B cell (primary cell): ENCODE measurements at regions of chr3 and their contacts with region 1.

Region 1: DNA sequence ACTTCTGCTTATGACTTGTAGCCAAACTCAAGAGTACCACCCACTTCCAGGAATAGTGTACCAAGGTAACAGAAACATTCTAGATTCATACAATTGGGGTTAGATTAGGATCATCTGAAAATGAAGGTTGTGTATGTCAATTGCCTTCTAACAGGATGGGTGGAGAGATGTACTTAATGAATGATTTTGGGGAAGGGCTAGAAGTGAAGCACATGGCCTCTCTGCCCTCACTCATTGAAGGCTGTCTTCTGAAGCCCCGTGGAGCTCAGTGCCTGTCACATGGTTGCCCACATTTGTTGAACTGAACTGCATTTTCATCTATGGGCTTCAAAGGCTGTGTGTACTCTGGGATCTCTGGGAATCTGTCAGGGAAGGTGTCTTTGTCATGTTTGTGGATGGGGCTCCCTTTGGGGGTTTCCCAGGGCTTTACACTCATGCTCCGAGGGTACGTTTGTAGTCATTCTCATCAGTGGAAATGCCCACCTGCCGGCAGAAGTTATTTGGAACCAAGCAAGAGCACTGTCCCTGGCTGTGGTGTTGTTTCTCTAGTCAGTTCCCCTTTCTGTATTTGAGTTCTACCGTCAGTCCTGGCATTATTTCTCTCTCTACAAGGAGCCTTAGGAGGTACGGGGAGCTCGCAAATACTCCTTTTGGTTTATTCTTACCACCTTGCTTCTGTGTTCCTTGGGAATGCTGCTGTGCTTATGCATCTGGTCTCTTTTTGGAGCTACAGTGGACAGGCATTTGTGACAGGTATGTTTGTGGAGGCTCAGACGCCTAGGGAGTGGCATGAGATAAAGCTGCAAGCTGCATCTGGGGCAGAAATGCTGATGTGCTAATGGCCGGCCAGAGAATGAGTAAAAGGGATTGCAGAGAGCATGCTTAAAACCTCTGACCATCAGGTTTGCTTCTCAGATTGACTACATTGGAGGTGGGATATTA is 22.4 kb downstream of the CD86 start:
- DNase-seq: peak; percentile 77
- ATAC-seq: peak; percentile 72
- H3K4me3 ChIP-seq: peak overlapping the region; percentile 44 to 95 (median 76)
- H3K4me3 Mint-ChIP-seq: peak overlapping the region; percentile 94
- H3K27ac ChIP-seq: peak overlapping the region; percentile 64 to 81
- H3K27ac Mint-ChIP-seq: peak overlapping the region; percentile 96
- H3K4me1 ChIP-seq: peaks cover 76 to 83% of the 10 kb centered on the region in 2 donors
- H3K4me1 Mint-ChIP-seq: peaks cover 90% of the 10 kb centered on the region
- H3K27me3 ChIP-seq: no peaks in the 10 kb centered on the region
- H3K27me3 Mint-ChIP-seq: no peaks in the 10 kb centered on the region
- CTCF ChIP-seq: peak; percentile 33

Region 2: DNA sequence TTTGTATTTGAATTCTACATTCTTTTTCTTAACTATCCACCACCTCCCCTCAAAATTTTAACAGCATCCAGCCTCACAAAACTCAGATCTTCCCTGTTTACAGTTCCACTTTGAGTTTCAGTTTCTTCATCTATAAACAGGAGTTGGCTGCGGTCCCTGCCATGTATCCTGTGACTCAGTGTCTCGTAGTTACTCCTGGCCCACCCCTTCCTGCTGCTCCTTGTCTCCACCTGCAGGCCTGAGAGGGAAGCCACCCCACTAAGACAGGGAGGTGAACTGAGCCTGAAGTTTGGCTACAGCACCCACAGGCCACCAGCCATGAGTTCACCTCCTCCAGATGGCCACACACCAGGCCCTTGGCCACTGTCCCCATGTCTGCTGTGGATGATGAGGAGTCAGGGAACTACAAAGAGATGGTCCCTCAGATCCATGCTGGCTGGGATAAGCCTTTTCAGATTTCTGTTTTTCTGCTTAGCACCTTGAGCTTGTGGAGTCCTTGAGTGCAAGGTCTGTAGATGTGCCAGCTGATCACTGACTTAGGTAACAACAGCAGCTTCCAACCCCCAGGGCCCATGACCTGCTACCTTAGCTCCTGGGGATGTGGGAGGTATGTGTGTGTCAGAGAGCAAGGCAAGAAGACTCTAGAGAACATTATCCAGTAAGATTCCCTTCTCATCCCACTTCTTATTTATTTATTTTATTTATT is 15.0 kb after region 1 on chr3:
- CTCF ChIA-PET with region 1: interaction called, 10 read pairs
- POLR2A ChIA-PET with region 1: interaction called, 4 read pairs
- intact Hi-C with region 1: loop called (anchors 2 kb)
- DNase-seq: peak; percentile 40
- ATAC-seq: peak; percentile 34
- H3K4me3 ChIP-seq: no peak overlapping the region
- H3K4me3 Mint-ChIP-seq: peak overlapping the region; percentile 74
- H3K27ac ChIP-seq: peak overlapping the region in 1 of 2 donors; percentile 60
- H3K27ac Mint-ChIP-seq: peak overlapping the region; percentile 81
- H3K4me1 ChIP-seq: peaks cover 23 to 27% of the 10 kb centered on the region in 2 donors
- H3K4me1 Mint-ChIP-seq: peaks cover 37% of the 10 kb centered on the region
- H3K27me3 ChIP-seq: no peaks in the 10 kb centered on the region
- H3K27me3 Mint-ChIP-seq: no peaks in the 10 kb centered on the region
- CTCF ChIP-seq: peak; percentile 36